SK-N-SH (cell line): ENCODE measurements at regions of chr7 and their contacts with region 1.

Region 1: DNA sequence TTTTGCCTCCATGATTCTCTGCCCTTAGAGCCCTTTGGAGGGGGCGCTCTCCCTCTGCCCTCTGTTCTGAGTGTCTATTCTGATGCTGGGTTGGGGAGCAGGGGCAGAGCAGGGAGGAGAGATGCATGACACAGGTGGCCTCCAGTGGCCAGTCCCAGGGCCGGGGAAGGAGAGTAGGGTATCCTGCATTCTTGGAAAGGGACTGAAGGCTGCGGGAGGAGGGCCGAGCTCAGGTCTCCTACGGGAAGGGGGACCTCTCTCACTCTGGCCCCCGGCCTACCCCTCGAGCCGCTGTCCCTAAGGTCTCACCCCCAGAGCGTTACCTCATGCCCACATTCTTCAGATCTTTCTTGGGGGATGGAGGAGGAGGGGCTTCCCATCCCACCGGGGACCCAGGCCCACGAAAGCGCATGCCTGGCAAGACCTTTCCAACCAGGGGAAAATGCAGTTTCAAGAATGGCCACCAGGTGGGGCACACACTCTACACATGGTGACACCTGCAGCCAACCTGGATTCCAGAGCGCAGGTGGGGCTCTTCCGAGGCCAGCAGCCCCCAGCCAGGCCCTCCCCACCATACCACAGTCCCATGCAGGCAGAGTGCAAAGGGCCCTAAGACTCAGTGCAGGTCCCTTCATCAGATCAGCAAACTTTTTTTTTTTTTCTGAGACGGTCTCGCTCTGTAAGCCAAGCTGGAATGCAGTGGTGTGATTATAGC is 86.4 kb downstream of the MYL10 start:
- DNase-seq: peak; percentile 85
- H3K4me3 ChIP-seq: no peak overlapping the region; a peak in 1 of 4 replicates
- H3K27ac ChIP-seq: no peak overlapping the region
- H3K4me1 ChIP-seq: peaks cover 0 to under 1% of the 10 kb centered on the region in 2 experiments; a peak in 1 of 4 replicates
- H3K27me3 ChIP-seq: no peaks in the 10 kb centered on the region
- CTCF ChIP-seq: peak; percentile 99
- EP300 ChIP-seq: no peak
- RAD21 ChIP-seq: peak; percentile 97

Region 2: GRCh38 chr7:101519324-101520023 is 23.2 kb before region 1 on chr7:
- CTCF ChIA-PET with region 1: interaction called, 17 read pairs
- POLR2A ChIA-PET with region 1: no interaction called
- DNase-seq: no peak
- H3K4me3 ChIP-seq: no peak overlapping the region
- H3K27ac ChIP-seq: no peak overlapping the region
- H3K4me1 ChIP-seq: no peaks in the 10 kb centered on the region; a peak in 1 of 4 replicates
- H3K27me3 ChIP-seq: peaks cover 18% of the 10 kb centered on the region; the same call in 1 of the 2 replicates
- CTCF ChIP-seq: no peak
- EP300 ChIP-seq: no peak
- RAD21 ChIP-seq: no peak

Region 3: GRCh38 chr7:101567230-101567629 is 24.5 kb after region 1 on chr7:
- CTCF ChIA-PET with region 1: interaction called, 19 read pairs
- POLR2A ChIA-PET with region 1: interaction called, 3 read pairs
- DNase-seq: no peak
- H3K4me3 ChIP-seq: no peak overlapping the region
- H3K27ac ChIP-seq: no peak overlapping the region
- H3K4me1 ChIP-seq: no peaks in the 10 kb centered on the region; a peak in 1 of 4 replicates
- H3K27me3 ChIP-seq: no peaks in the 10 kb centered on the region
- CTCF ChIP-seq: no peak
- EP300 ChIP-seq: no peak
- RAD21 ChIP-seq: no peak

Region 4: GRCh38 chr7:101681170-101682007 is 138.7 kb after region 1 on chr7:
- CTCF ChIA-PET with region 1: interaction called, 10 read pairs
- POLR2A ChIA-PET with region 1: no interaction called
- DNase-seq: peak; percentile 94
- H3K4me3 ChIP-seq: peak overlapping the region in 1 of 2 experiments; percentile 35; a peak in 1 of 4 replicates
- H3K27ac ChIP-seq: peak overlapping the region; percentile 34 to 88
- H3K4me1 ChIP-seq: peaks cover 15% of the 10 kb centered on the region in 2 experiments; a peak in 3 of 4 replicates
- H3K27me3 ChIP-seq: no peaks in the 10 kb centered on the region
- CTCF ChIP-seq: no peak
- EP300 ChIP-seq: peak; percentile 53 to 62; a peak in 3 of 4 replicates
- RAD21 ChIP-seq: peak; percentile 32; the same call in 1 of the 2 replicates

Region 5: GRCh38 chr7:101815835-101816493 is 273.3 kb after region 1 on chr7:
- CTCF ChIA-PET with region 1: interaction called, 15 read pairs
- POLR2A ChIA-PET with region 1: no interaction called
- DNase-seq: peak; percentile 97
- H3K4me3 ChIP-seq: peak overlapping the region; percentile 53 to 97
- H3K27ac ChIP-seq: peak overlapping the region in 1 of 2 experiments; percentile 94; a peak in 2 of 4 replicates
- H3K4me1 ChIP-seq: peaks cover 18 to 42% of the 10 kb centered on the region in 2 experiments; a peak in 3 of 4 replicates
- H3K27me3 ChIP-seq: no peaks in the 10 kb centered on the region
- CTCF ChIP-seq: no peak
- EP300 ChIP-seq: peak in 1 of 2 experiments; percentile 60; a peak in 1 of 4 replicates
- RAD21 ChIP-seq: peak; percentile 25; the same call in 1 of the 2 replicates

Region 6: DNA sequence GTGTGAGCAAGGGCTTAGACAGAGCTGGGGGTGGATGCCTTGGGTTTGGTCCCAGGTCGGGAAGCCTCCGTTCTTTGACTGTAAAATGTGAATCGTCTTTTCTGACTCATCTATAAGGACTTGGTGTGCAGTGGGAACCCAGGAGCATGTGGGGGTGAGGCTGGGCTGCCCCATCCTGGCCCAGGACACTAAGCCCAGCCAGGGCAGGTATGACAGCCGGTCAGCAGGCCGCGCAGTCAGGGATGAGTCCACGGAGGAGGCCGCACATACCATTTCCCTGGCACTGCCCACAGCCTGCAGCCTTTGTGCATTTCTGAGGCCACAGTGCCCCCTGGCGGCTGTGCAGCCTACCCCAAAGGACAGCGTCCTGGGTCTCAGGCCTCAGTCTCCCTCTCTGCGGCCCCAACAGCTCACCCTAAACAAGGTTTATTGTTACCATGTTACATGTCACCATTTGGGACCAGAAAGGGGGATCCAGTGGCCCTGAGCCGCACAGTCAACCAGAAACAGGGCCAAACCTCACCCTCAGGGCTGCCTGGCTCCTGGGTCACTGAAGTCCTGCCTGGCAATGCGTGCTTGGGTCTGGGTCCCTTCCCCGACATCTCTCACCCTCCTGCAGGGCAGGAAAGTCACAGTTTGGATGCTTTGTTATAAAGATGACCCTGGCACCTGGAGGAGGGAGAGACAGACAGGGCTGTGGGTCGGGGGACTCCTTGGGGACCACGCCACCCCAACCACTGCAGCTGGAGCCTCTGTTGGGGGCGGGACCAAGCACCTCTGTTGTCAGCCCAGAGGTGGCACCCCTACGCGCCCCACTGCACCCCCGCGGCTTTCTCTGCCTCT is 729.6 kb after region 1 on chr7:
- CTCF ChIA-PET with region 1: interaction called, 119 read pairs
- POLR2A ChIA-PET with region 1: interaction called, 3 read pairs
- DNase-seq: peak; percentile 95
- H3K4me3 ChIP-seq: no peak overlapping the region; a peak in 1 of 4 replicates
- H3K27ac ChIP-seq: no peak overlapping the region
- H3K4me1 ChIP-seq: peaks cover 0 to 22% of the 10 kb centered on the region in 2 experiments; a peak in 1 of 4 replicates
- H3K27me3 ChIP-seq: no peaks in the 10 kb centered on the region
- CTCF ChIP-seq: peak; percentile 100
- EP300 ChIP-seq: no peak
- RAD21 ChIP-seq: peak; percentile 99